ENCODE measurements at regions of chr6 and their contacts with region 1.

Region 1: DNA sequence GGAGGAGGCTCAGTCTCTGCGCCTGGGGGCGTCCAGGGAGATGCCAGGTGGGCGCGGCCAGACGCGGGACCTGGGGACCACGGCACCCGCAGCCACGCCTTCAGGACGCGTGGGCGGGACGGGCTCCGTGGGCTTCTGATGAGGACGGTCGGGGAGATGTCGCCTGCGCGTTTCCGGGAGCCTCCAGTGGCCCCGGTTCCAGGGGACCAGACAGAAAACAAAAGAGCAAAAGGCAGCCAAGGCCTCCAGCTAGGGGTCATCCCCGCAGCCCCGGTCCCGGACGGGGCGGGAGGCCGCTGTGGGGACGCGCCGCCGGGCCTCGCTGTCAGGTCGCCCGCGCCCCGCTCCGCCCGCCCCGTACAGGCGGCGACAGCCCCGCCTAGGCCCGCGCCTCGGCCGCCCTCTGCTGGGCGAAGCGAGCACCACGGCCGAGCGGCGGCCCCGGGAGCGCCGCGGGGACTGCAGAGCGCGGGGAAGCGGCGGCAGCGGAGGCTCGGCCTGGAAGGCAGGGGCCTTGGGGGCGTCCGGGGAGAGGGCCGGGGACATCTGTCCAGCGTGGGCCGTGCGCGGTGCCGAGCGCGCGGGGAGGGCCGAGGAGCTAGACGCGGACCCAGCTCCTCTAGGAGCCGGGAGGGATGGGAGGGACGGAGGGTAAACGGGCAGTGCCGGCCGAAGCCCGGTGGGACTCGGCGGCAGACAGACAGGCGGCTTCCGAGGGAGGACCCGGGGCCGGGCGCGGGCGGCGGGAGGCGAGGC is 48.7 kb downstream of the TMEM242 start:
- DNase-seq: no peak
- H3K4me3 ChIP-seq: peak overlapping the region; percentile 67 to 79 (median 68)
- H3K27ac ChIP-seq: peak overlapping the region; percentile 85 to 89 (median 88)
- H3K4me1 ChIP-seq: peaks cover 18 to 30% (median 24%) of the 10 kb centered on the region in 4 donors
- H3K27me3 ChIP-seq: no peaks in the 10 kb centered on the region
- CTCF ChIP-seq: peak; percentile 92 to 96 (median 92)
- EP300 ChIP-seq: no peak
- POLR2A ChIP-seq: no peak

Region 2: DNA sequence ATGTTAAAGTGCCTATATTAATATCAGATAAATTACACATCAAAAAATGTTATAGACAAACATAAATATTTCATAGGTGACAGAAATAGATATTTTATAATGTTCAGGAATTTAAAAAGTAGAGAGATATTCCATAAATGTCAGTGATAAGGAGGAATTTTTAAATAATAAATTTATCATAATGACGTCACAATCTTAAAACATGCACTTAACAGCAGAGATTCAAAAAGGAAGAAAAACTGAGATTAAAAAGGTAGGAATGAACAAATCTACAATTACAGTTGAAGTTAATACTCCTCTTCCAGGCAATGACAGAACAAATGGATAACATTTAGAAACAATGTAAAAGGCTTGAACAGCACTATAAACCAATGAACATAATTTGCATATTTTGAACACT is 1473.6 kb before region 1 on chr6:
- intact Hi-C with region 1: no loop called
- DNase-seq: no peak
- H3K4me3 ChIP-seq: no peak overlapping the region
- H3K27ac ChIP-seq: no peak overlapping the region
- H3K4me1 ChIP-seq: no peaks in the 10 kb centered on the region
- H3K27me3 ChIP-seq: no peaks in the 10 kb centered on the region
- CTCF ChIP-seq: no peak
- EP300 ChIP-seq: no peak
- POLR2A ChIP-seq: no peak

Region 3: DNA sequence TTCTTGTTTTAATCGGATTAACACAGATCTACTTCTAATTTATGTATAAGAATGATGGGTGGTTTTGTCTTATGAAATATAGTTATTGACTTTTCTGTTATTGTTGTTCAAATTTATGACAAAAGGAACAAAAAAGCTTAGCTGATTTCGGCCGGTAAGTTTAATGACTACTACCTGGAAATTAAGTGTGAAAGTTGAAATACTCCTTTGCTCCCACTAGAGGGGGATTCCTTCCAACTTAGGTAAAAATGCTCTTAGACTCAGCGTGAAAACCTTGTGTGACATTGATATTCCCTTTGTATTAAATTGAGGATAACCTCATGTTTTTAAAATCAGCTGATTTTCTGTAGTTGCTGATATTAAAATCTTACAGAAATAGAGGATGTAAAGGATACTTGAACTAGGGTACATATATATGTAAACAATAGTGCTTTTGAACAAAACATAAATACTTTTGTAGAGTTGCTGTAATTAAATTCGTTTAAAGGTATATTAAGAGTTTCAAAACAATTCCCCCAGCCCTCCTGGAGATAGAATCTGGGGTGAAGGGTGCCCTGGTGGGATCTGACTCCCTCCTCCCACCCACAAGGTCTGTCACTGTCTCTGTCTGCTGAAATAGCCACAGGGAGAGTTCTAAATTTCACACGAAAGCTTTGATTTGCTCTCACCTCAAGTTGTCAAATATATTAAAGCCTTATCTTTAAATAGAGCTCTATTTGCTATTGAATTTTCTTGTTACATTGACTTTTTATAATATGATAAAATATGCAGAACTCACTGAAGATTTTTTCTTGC is 240.0 kb before region 1 on chr6:
- intact Hi-C with region 1: loop called (anchors 5 kb)
- DNase-seq: no peak
- H3K4me3 ChIP-seq: no peak overlapping the region
- H3K27ac ChIP-seq: peak overlapping the region in 2 of 4 donors; percentile 49 to 58
- H3K4me1 ChIP-seq: peaks cover 29 to 50% (median 49%) of the 10 kb centered on the region in 4 donors
- H3K27me3 ChIP-seq: no peaks in the 10 kb centered on the region
- CTCF ChIP-seq: peak; percentile 62 to 71 (median 65)
- EP300 ChIP-seq: no peak
- POLR2A ChIP-seq: no peak

Region 4: DNA sequence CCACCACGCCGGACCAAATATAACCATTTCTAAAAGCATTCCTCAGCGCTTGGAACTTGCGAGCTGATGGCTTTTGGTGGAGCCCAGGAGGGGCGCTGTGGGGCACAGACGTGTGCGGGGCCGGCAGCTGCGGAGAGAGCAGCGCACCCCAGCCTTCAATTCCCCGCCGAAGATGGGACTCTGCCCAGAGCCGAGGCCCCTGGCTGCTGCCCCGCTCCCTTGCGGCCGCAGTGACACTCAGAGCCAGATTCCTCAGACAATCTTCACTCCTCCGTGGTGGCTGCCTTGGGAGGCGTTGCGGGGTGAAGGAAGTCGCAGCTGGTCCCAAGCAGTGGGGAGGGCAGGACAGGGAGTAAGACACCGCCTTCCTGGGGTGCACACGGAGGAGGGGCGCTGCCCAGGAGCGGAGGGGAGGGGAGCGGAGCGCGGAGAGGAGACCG is 39.0 kb before region 1 on chr6:
- intact Hi-C with region 1: loop called (anchors 5 kb)
- DNase-seq: no peak
- H3K4me3 ChIP-seq: peak overlapping the region; percentile 53 to 65 (median 62)
- H3K27ac ChIP-seq: peak overlapping the region; percentile 82 to 90 (median 89)
- H3K4me1 ChIP-seq: peaks cover 31 to 45% (median 40%) of the 10 kb centered on the region in 4 donors
- H3K27me3 ChIP-seq: peaks cover 0 to 18% (median 0%) of the 10 kb centered on the region in 4 donors
- CTCF ChIP-seq: peak; percentile 52 to 73 (median 56)
- EP300 ChIP-seq: no peak
- POLR2A ChIP-seq: no peak